OCI-LY7 (cell line): ENCODE measurements at regions of chr2 and their contacts with region 1.

Region 1: DNA sequence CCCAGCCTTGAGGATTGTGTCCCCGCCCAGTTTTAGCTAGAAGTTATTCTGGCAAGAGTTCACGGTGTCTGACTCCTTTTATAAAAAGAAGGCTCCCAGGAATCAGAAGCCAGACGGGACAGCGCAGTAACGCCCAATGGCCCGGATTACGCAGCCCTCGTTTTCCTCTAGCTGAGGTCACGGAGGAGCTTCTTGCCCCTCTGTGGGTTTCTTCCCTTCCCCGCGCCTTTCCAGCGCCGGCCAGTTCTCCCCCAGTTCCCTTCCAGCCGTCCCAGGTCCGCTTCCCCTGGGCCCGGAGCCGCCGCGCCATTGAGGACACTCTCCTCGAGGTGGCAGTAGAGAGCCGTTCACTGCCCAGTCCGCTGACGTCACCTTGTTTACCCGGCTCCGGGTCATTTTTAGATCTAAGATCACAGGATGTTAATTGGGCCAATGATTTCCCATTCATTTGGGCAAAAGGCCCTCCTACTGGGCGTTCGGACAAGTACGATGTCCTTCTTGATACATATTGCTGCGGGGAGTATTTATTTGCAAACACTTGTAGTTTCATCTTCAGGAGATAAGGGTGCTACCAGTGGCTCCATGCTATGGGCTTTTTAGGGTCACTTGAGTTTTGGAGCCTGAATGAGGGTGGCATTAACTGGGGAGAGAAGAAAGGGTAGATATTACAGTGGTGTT is 81.5 kb upstream of the PPM1B start:
- DNase-seq: peak; percentile 86
- H3K4me3 ChIP-seq: peak overlapping the region; percentile 56
- H3K27ac ChIP-seq: no peak overlapping the region
- H3K4me1 ChIP-seq: peaks cover 27% of the 10 kb centered on the region
- CTCF ChIP-seq: peak; percentile 92

Region 2: GRCh38 chr2:44044281-44044720 is 42.9 kb before region 1 on chr2:
- CTCF ChIA-PET with region 1: interaction called, 3 read pairs
- POLR2A ChIA-PET with region 1: interaction called, 3 read pairs
- intact Hi-C with region 1: loop called (anchors 2 kb)
- DNase-seq: peak; percentile 86
- H3K4me3 ChIP-seq: no peak overlapping the region
- H3K27ac ChIP-seq: no peak overlapping the region
- H3K4me1 ChIP-seq: no peaks in the 10 kb centered on the region
- CTCF ChIP-seq: peak; percentile 84

Region 3: GRCh38 chr2:44237221-44237620 is 150.0 kb after region 1 on chr2:
- CTCF ChIA-PET with region 1: no interaction called
- POLR2A ChIA-PET with region 1: no interaction called
- intact Hi-C with region 1: loop called (anchors 1 kb)
- DNase-seq: peak; percentile 48
- H3K4me3 ChIP-seq: peak overlapping the region; percentile 36
- H3K27ac ChIP-seq: peak overlapping the region; percentile 16
- H3K4me1 ChIP-seq: peaks cover 18% of the 10 kb centered on the region
- CTCF ChIP-seq: no peak

Region 4: DNA sequence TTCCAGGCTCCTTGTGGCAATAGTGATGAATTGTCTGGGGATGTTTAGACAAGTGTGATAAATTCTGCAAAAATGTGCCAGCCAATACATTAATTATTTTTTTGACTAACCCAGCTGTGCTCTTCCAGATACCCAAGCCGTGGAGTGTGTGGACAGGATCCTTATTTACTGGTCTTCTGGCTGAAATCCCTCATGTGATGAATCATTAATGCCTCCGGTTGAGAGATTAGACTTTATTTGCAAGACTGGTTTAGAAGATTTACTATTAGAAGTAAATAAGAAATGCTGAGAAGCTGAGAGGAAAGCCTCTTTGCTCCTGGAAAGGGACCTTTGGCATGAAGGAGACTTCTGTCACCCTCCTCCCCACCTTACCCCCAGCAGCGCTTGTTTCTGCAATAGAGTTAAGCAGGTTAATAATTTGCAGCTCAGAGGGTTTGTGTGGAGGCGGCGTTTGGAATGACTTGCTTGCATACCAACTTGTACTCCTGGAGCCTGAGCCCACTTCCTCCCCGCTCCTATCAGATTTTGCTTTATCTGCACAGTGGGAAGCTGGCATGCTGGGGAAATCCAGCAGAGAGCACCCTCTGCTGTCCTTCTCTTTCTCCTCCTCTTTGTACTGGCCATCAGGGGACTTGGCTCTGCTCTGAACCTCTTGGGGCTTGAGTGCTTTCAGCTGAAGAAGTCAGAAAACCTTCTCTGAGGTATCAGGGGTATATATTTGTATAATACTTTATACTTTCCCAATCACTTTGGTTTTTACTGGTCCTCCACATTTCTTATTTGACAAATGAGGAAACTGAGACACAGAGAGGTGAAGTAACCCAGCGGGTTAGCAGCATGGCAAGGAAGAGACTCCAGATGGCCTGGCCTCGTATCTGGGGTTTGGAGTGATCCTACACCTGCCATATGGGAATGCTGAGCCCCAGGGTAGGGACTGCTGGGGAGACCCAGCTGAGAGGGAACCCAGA is 204.4 kb after region 1 on chr2:
- CTCF ChIA-PET with region 1: no interaction called
- POLR2A ChIA-PET with region 1: no interaction called
- intact Hi-C with region 1: loop called (anchors 1 kb)
- DNase-seq: no peak
- H3K4me3 ChIP-seq: no peak overlapping the region
- H3K27ac ChIP-seq: no peak overlapping the region
- H3K4me1 ChIP-seq: peaks cover 8% of the 10 kb centered on the region
- CTCF ChIP-seq: 0 out of 2 replicates have a peak, but pooled peaks have one; percentile 15

Region 5: DNA sequence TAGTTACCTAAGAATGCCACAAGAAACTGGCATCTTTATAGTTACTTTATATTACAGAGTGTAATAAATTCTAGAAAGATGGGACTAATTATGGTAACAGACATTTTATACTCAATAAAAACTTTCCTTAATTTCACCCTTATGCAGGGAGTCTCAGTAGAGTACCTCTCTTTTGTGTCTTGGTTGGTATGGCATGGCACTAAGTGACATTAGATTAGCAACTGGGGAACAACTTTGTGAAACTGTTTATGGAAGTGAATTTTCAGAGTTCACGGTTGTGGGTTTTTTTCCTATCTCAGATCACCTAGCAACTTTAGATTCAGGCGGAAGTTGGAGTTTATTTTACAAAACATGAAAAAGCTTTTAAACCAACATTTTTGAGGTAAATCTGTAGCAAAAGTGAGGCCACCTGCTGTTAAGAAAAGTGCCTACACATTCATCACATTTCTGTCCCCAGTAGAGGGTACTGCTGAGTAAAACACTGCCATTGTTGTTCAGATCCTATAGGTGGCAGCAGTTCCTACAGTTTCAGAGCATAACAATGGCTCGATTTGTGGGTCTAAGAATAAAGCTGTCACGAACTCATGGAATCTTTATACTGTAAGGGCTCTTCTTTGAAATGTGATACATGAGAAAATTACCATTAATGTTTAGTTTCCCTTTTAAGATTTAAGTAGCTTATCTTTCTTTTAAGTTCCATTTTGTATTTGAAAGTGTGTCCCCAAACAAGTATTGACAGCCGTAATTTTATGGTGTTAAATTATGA is 392.1 kb after region 1 on chr2:
- CTCF ChIA-PET with region 1: no interaction called
- POLR2A ChIA-PET with region 1: no interaction called
- intact Hi-C with region 1: loop called (anchors 1 kb)
- DNase-seq: peak; percentile 83
- H3K4me3 ChIP-seq: no peak overlapping the region
- H3K27ac ChIP-seq: no peak overlapping the region
- H3K4me1 ChIP-seq: no peaks in the 10 kb centered on the region
- CTCF ChIP-seq: peak; percentile 100